ENCODE measurements at regions of chr5 and their contacts with region 1.

Region 1: GRCh38 chr5:150700594-150701293 is at the start of gene RBM22:
- DNase-seq: peak; percentile 95
- H3K4me3 Mint-ChIP-seq: no peak within 1 kb of the TSS
- H3K27ac Mint-ChIP-seq: no peak within 1 kb of the TSS
- H3K4me1 Mint-ChIP-seq: peaks cover 8% of the 10 kb centered on the region
- H3K27me3 Mint-ChIP-seq: no peaks in the 10 kb centered on the region
- total RNA-seq, gene RBM22: 86.2 to 88.2 TPM

Region 2: DNA sequence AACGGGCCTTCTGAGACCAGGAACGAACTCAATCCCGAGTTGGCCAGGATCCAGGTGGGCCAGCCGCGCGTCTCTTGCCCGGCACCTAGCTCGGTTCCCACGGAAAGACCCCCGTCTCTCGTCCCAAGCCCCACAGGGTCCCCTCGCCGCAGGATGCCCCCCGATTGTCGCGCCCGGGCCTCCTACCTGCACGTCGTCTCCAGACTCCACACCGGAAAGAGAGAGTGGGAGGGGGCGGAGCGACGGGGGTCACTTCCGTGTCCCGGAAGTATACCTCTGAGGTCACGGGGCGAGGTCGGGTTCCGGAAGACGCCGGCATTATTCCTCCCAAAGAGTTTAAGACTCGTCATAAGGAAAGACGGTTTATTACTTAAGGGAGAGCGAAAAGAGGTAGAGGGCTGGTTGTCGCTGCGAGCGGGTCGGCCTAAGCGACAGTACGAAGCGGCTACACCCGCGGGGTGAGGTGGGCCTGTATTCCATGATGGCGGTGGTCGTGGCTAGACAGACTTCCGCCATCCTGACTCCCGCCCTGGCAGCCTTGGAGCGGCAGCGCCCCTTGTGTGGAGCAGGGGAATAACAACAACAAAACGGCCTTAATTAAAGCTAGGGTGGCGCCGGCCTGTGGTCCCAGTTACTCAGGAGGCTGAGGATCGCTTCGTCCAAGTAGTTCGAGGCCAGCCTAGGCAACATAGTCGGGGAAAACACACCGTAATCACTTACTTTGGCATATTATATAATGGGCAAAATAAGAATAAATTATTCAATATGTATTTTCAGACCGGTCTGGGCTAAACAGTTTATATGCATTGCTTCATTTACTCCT is 251.0 kb before region 1 on chr5 and contains the start of gene RPS14:
- CTCF ChIA-PET with region 1: interaction called, 5 read pairs
- intact Hi-C with region 1: loop called (anchors 2 kb)
- DNase-seq: peak; percentile 97
- H3K4me3 Mint-ChIP-seq: peak within 1 kb of the TSS; percentile 93
- H3K27ac Mint-ChIP-seq: peak within 1 kb of the TSS; percentile 99
- H3K4me1 Mint-ChIP-seq: peaks cover 33% of the 10 kb centered on the region
- H3K27me3 Mint-ChIP-seq: no peaks in the 10 kb centered on the region
- total RNA-seq, gene RPS14: 4,594 to 4,738 TPM

Region 3: DNA sequence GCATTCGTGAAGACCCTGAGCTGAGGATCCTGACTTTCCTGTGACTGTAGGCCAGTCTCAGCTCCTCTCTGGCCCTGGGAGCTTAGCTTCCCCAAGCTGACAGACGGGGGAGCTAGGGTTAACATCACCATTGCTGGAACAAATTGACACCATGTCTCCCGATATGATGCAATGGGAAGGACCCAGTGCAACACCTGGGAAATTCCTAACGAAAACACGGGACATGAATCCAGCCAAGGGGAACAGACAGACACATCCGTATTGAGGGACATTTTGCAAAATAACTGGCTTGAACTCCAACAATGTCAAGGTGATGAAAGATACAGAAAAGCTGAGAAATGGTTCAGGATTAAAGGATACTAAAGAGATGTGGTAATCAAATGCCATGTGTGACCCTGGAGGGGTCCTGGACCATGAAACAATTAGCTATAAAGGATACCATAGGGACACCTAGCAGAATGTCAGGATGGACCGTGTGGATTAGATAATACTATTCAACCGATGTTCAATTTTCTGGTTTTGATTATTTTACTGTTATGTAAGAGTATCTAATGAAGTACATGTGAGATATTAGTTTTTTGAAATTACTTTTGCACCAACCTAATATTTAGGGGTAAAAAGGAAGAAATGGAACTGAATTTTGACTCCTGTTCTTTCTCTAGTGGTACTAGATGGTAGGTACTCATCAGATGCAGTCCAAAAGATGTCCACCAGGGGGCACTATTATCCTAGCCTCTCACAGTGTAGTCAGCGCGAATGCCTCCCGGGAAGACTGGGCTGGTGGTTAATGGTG is 140.1 kb before region 1 on chr5:
- CTCF ChIA-PET with region 1: interaction called, 4 read pairs
- intact Hi-C with region 1: loop called (anchors 2 kb)
- DNase-seq: peak; percentile 96
- H3K4me3 Mint-ChIP-seq: no peak overlapping the region
- H3K27ac Mint-ChIP-seq: no peak overlapping the region
- H3K4me1 Mint-ChIP-seq: no peaks in the 10 kb centered on the region
- H3K27me3 Mint-ChIP-seq: no peaks in the 10 kb centered on the region

Region 4: GRCh38 chr5:150758531-150759333 is 58.0 kb after region 1 on chr5 and contains the start of gene DCTN4:
- CTCF ChIA-PET with region 1: interaction called, 10 read pairs
- intact Hi-C with region 1: loop called (anchors 1 kb)
- DNase-seq: peak; percentile 96
- H3K4me3 Mint-ChIP-seq: no peak within 1 kb of the TSS
- H3K27ac Mint-ChIP-seq: no peak within 1 kb of the TSS
- H3K4me1 Mint-ChIP-seq: peaks cover 38% of the 10 kb centered on the region
- H3K27me3 Mint-ChIP-seq: no peaks in the 10 kb centered on the region
- total RNA-seq, gene DCTN4: 41.0 to 47.7 TPM

Region 5: GRCh38 chr5:150846654-150847333 is 146.1 kb after region 1 on chr5:
- CTCF ChIA-PET with region 1: interaction called, 33 read pairs
- intact Hi-C with region 1: loop called (anchors 1 kb)
- DNase-seq: peak; percentile 83
- H3K4me3 Mint-ChIP-seq: peak overlapping the region; percentile 79
- H3K27ac Mint-ChIP-seq: peak overlapping the region; percentile 80
- H3K4me1 Mint-ChIP-seq: peaks cover 25% of the 10 kb centered on the region
- H3K27me3 Mint-ChIP-seq: no peaks in the 10 kb centered on the region

Region 6: GRCh38 chr5:151252762-151253604 is 552.2 kb after region 1 on chr5 and contains the start of gene GM2A:
- CTCF ChIA-PET with region 1: no interaction called
- intact Hi-C with region 1: loop called (anchors 5 kb)
- DNase-seq: peak; percentile 99
- H3K4me3 Mint-ChIP-seq: peak within 1 kb of the TSS; percentile 89
- H3K27ac Mint-ChIP-seq: peak within 1 kb of the TSS; percentile 90
- H3K4me1 Mint-ChIP-seq: peaks cover 43% of the 10 kb centered on the region
- H3K27me3 Mint-ChIP-seq: no peaks in the 10 kb centered on the region
- total RNA-seq, gene GM2A: 21.1 to 21.8 TPM